ENCODE measurements at regions of chr3 and their contacts with region 1.

Region 1: GRCh38 chr3:25856902-25857518 is 67.1 kb downstream of the OXSM start:
- DNase-seq: peak; percentile 27
- H3K4me3 Mint-ChIP-seq: no peak overlapping the region
- H3K27ac Mint-ChIP-seq: no peak overlapping the region
- H3K4me1 Mint-ChIP-seq: peaks cover 2% of the 10 kb centered on the region
- H3K27me3 Mint-ChIP-seq: no peaks in the 10 kb centered on the region

Region 2: GRCh38 chr3:25782938-25783660 is 73.9 kb before region 1 on chr3 and contains the start of gene NGLY1:
- CTCF ChIA-PET with region 1: interaction called, 3 read pairs
- intact Hi-C with region 1: loop called (anchors 5 kb)
- DNase-seq: peak; percentile 87
- H3K4me3 Mint-ChIP-seq: peak within 1 kb of the TSS; percentile 88
- H3K27ac Mint-ChIP-seq: peak within 1 kb of the TSS; percentile 88
- H3K4me1 Mint-ChIP-seq: peaks cover 40% of the 10 kb centered on the region
- H3K27me3 Mint-ChIP-seq: no peaks in the 10 kb centered on the region
- total RNA-seq, gene NGLY1: 49.0 to 50.0 TPM

Region 3: DNA sequence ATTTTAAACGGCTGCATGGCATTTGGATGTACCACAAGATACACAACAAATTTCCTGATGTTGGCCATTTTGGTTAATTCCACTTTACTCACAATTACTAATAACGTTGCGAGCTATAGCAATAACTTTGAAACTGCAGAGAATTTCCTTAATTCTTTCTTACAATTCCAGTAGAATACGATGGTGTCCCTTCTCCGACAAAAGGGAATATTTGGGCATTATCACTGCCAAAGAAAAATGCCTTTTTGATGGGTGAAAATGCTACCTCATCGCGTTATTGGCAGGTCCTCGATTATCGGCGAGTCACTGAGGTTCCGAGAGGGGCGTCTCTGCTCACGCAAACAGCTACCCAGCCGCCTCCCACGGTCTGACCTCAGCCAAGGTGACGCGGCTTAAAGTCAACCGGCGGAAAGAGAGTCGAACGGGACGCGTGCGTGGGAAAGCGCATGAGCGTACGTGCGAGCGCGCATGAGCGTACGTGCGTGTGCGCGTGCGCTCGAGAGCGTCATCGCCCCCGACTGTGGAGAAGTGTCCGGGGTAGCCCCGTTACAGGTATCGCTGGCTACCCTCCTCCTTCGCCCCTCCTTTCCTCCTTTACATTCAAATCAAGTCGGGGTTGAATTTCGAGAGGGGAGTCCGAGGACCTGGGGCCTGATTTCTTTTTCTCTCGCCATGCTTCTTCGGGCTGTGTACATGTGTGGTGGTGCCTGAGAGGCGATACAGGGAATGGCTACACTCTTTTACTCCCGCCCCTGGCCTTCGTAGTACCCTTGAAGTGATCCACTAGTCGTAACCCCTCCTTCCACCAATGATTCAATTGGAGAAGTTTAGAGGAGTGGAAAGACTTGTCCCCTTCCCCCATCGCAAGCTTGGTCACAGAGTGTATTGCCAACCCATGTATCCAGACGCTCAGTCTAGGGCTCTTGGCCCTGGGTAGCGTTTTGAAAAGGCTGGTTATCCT is 67.1 kb before region 1 on chr3 and contains the start of gene OXSM:
- CTCF ChIA-PET with region 1: no interaction called
- intact Hi-C with region 1: loop called (anchors 2 kb)
- DNase-seq: peak; percentile 93
- H3K4me3 Mint-ChIP-seq: peak within 1 kb of the TSS; percentile 97
- H3K27ac Mint-ChIP-seq: peak within 1 kb of the TSS; percentile 97
- H3K4me1 Mint-ChIP-seq: peaks cover 42% of the 10 kb centered on the region
- H3K27me3 Mint-ChIP-seq: no peaks in the 10 kb centered on the region
- total RNA-seq, gene OXSM: 10.0 to 11.4 TPM